GM10248 (cell line): ENCODE measurements at regions of chr12 and their contacts with region 1.

Region 1: GRCh38 chr12:56551070-56551469 is 29.4 kb downstream of the RBMS2 start:
- DNase-seq: no peak
- CTCF ChIP-seq: no peak

Region 2: GRCh38 chr12:56529290-56530055 is 21.6 kb before region 1 on chr12:
- CTCF ChIA-PET with region 1: no interaction called
- POLR2A ChIA-PET with region 1: no interaction called
- DNase-seq: no peak
- CTCF ChIP-seq: no peak

Region 3: DNA sequence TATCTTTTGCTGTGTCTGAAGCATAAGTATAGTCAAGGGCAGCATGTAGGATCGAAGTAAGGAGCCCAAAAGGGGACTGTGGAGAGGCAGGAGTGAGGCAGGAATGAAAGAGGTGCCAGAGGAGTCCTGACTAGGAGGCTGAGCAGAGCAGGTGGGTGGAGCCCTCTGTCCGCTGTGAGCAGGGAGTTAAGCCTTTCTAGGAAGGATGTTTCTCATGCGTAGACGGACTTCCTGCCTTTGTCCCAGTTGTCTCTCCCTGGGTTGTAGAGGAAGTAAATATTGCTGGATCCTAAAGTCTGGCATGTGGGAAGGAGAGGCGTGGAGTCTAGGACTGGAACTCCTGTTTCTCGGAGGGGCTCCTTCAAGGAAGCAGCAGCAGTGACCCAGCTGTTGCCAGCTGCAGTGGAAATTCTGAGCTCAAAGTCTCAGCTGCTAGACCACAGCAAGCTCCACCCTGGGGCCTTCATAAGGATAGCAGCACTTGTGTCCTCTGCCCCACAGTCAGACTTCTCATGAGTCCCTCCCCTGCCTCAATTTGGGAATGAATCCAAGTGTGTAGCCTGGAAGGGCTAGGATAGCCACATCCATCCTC is 14.5 kb after region 1 on chr12:
- CTCF ChIA-PET with region 1: interaction called, 13 read pairs
- POLR2A ChIA-PET with region 1: no interaction called
- DNase-seq: peak; percentile 58
- CTCF ChIP-seq: no peak